Psoas muscle (tissue), 8 donors: ENCODE measurements at regions of chr6 and their contacts with region 1.

Region 1: DNA sequence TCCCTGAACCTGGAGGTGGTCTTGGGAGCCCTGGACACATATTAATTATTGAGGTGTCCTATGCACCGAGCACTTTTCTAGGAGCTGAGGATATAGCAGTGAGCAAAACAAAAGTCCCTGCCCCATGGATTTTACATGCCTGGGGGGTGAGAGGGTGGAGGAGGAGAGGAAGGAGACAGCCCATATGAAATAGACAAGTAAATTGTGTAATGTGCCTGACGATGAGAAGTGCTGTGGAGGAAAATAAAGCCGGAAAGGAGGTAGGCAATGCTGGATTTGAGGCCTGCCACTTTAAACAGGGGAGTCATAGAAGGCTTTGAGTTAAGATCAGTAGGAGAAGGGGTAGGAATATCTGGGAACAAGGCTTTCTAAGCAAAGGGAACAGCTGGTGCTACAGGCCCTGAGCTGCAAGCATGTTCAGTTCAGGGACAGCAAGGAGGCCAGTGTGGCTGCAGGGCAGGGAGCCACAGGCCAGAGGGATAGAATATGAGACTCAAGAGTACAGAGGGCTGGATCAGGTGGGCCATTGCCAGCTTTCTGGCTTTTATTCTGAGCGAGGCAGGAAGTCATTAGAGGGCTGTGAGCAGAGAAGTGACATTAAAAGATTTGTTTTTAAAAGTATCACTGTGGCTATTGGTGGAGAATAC is 19.1 kb upstream of the MYLIP start:
- DNase-seq: peak in 1 of 2 donors; percentile 79
- ATAC-seq: peak; percentile 71 to 91 (median 82)
- H3K4me3 ChIP-seq: no peak overlapping the region
- H3K27ac ChIP-seq: peak overlapping the region; percentile 82
- H3K4me1 ChIP-seq: peaks cover 52% of the 10 kb centered on the region
- H3K27me3 ChIP-seq: no peaks in the 10 kb centered on the region
- CTCF ChIP-seq: no peak

Region 2: GRCh38 chr6:15879382-15880261 is 230.2 kb before region 1 on chr6:
- intact Hi-C with region 1: loop called in 1 of 2 experiments (anchors 10 kb)
- DNase-seq: peak; percentile 71 to 85
- ATAC-seq: peak in 2 of 4 donors; percentile 38 to 61
- H3K4me3 ChIP-seq: no peak overlapping the region
- H3K27ac ChIP-seq: no peak overlapping the region
- H3K4me1 ChIP-seq: peaks cover 4% of the 10 kb centered on the region
- H3K27me3 ChIP-seq: no peaks in the 10 kb centered on the region
- CTCF ChIP-seq: no peak

Region 3: DNA sequence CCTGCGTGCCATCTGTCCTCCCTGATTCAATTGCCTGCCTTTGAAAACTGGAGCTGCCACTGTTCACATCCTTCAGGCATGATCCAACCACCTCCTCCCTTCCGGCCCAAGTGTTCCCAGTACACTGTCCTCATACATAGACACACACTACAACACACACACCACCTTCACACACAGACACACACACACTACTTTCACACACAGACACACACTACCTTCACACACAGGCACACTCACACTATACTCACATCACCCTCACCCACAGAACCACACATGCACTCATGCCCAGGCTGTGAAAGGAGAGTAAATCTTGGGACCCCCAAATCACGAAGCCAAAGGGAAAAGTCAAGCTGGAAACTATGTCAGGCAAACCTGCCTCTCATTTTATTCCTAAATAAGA is 90.3 kb before region 1 on chr6:
- intact Hi-C with region 1: no loop called
- DNase-seq: no peak
- ATAC-seq: no peak
- H3K4me3 ChIP-seq: no peak overlapping the region
- H3K27ac ChIP-seq: no peak overlapping the region
- H3K4me1 ChIP-seq: no peaks in the 10 kb centered on the region
- H3K27me3 ChIP-seq: no peaks in the 10 kb centered on the region
- CTCF ChIP-seq: no peak